ENCODE measurements at regions of chr1 and their contacts with region 1.

Region 1: GRCh38 chr1:20775700-20776099 is 11.4 kb downstream of the HP1BP3 start:
- DNase-seq: no peak
- ATAC-seq: no peak
- H3K4me3 ChIP-seq: no peak overlapping the region
- H3K4me3 Mint-ChIP-seq: no peak overlapping the region
- H3K27ac ChIP-seq: no peak overlapping the region
- H3K27ac Mint-ChIP-seq: no peak overlapping the region
- H3K4me1 ChIP-seq: peaks cover 2% of the 10 kb centered on the region
- H3K4me1 Mint-ChIP-seq: peaks cover 51% of the 10 kb centered on the region
- H3K27me3 ChIP-seq: no peaks in the 10 kb centered on the region
- H3K27me3 Mint-ChIP-seq: no peaks in the 10 kb centered on the region
- CTCF ChIP-seq: no peak

Region 2: DNA sequence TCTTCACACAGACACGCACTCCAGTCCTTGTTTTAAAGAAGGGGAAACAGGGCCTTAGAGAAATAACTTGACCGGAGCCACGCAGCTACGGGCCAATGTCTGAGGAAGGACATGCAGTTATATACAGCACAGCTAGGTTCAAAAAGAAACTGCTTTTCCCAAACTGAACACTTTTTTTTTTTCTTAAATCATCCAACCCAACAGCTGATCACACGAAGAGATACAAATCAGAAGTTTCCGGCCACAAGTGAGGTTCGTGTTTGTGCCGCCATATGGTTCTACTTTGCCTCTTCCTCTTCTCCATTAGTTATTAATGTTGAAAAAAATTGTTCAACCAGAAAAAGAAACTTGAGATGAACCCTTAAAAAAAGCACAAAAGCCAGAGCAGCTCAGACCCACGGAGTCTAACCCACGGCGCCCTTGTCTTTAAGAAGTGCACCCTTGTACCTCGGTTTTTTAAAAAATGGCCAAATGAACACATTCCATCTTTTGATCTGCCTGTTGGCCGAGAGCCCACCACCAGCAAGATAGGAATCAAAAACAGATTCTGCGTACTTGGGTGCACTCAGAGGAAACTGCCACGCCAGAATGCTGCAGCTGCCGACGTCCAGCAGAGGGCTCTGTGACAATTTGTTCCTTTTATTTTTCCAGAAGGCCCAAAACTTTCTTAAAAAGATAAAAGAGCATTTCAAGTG is 1384.7 kb before region 1 on chr1:
- CTCF ChIA-PET with region 1: no interaction called
- POLR2A ChIA-PET with region 1: no interaction called
- intact Hi-C with region 1: no loop called
- DNase-seq: peak; percentile 31 to 91 (median 62)
- ATAC-seq: peak; percentile 76
- H3K4me3 ChIP-seq: peak overlapping the region; percentile 51
- H3K4me3 Mint-ChIP-seq: peak overlapping the region; percentile 92
- H3K27ac ChIP-seq: peak overlapping the region; percentile 46 to 62
- H3K27ac Mint-ChIP-seq: peak overlapping the region; percentile 94
- H3K4me1 ChIP-seq: peaks cover 92% of the 10 kb centered on the region
- H3K4me1 Mint-ChIP-seq: peaks cover 86% of the 10 kb centered on the region
- H3K27me3 ChIP-seq: no peaks in the 10 kb centered on the region
- H3K27me3 Mint-ChIP-seq: no peaks in the 10 kb centered on the region
- CTCF ChIP-seq: peak; percentile 90

Region 3: GRCh38 chr1:20742671-20743070 is 33.0 kb before region 1 on chr1:
- CTCF ChIA-PET with region 1: no interaction called
- POLR2A ChIA-PET with region 1: no interaction called
- intact Hi-C with region 1: loop called in 1 of 2 experiments (anchors 5 kb)
- DNase-seq: no peak
- ATAC-seq: no peak
- H3K4me3 ChIP-seq: no peak overlapping the region
- H3K4me3 Mint-ChIP-seq: no peak overlapping the region
- H3K27ac ChIP-seq: no peak overlapping the region
- H3K27ac Mint-ChIP-seq: no peak overlapping the region
- H3K4me1 ChIP-seq: no peaks in the 10 kb centered on the region
- H3K4me1 Mint-ChIP-seq: no peaks in the 10 kb centered on the region
- H3K27me3 ChIP-seq: no peaks in the 10 kb centered on the region
- H3K27me3 Mint-ChIP-seq: no peaks in the 10 kb centered on the region
- CTCF ChIP-seq: no peak

Region 4: DNA sequence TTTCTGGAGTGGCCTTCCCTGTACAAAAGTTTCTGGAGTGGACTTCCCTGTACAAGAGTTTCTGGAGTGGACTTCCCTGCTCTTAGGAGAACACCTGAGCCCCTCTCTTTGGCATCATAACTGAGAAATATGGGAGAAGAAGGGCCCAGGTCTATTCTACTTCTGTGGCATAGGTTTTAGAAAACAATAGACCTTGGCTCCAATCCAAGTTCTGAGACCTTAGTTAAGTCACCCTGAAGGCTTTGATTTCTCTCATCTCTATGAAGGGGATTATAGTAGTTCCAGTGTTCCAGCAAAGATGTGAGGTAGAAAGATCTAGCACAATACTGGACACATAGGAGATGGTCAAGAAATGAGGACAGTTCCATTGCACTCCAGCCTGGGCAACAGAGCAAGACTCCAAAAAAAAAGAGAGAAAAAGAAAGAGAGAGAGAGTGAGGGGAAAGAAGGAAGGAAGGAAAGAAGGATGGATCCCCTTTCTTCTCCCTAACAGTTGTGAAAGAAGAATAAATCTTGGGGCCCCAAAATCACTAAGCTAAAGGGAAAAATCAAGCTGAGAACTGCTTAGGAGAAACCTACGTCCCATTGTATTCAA is 414.3 kb after region 1 on chr1:
- CTCF ChIA-PET with region 1: no interaction called
- POLR2A ChIA-PET with region 1: no interaction called
- intact Hi-C with region 1: loop called in 1 of 2 experiments (anchors 10 kb)
- DNase-seq: no peak
- ATAC-seq: no peak
- H3K4me3 ChIP-seq: no peak overlapping the region
- H3K4me3 Mint-ChIP-seq: no peak overlapping the region
- H3K27ac ChIP-seq: no peak overlapping the region
- H3K27ac Mint-ChIP-seq: no peak overlapping the region
- H3K4me1 ChIP-seq: no peaks in the 10 kb centered on the region
- H3K4me1 Mint-ChIP-seq: no peaks in the 10 kb centered on the region
- H3K27me3 ChIP-seq: peaks cover 0 to 3% of the 10 kb centered on the region in 2 experiments
- H3K27me3 Mint-ChIP-seq: peaks cover 8% of the 10 kb centered on the region
- CTCF ChIP-seq: no peak